Activated CD4-positive, alpha-beta memory T cell treated with anti-CD3 and anti-CD28 coated beads for 36 hours (primary cell): ENCODE measurements at regions of chr13 and their contacts with region 1.

Region 1: DNA sequence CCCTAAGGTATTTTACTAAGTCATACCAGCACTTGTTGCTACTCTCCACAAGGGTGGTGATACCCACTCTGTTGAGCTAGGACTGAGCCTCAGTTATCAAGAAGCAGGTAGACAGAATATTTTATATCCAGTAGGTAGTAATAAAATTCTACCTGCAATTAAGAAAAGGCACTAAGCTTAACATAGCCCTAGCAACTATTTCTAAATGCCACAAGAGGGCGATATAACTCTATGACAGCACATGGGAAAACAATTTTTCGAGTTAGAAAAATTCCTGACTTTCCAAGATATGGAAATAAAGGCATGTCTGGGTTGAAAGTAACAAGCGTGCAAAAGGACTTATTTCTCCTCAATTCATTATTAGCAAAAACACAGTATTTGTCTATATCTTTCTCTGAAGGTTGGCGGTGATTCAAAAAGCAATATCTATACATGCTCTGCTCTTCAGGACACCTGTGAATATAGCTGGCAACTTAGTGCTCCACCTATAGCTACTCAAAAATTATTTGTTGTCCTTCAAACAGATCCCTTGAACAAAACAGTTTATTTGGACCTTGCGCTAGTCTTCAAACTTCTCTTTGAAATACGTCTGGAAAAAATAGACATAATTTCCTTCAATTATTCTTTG is 14.7 kb downstream of the CCDC169 start:
- DNase-seq: no peak
- H3K4me3 Mint-ChIP-seq: no peak overlapping the region
- H3K27ac Mint-ChIP-seq: no peak overlapping the region
- H3K4me1 Mint-ChIP-seq: no peaks in the 10 kb centered on the region
- H3K27me3 Mint-ChIP-seq: peaks cover 4% of the 10 kb centered on the region

Region 2: GRCh38 chr13:35475960-35476943 is 806.7 kb before region 1 on chr13 and contains the start of gene MAB21L1:
- CTCF ChIA-PET with region 1: no interaction called
- POLR2A ChIA-PET with region 1: no interaction called
- intact Hi-C with region 1: no loop called
- DNase-seq: no peak
- H3K4me3 Mint-ChIP-seq: peak within 1 kb of the TSS; percentile 65
- H3K27ac Mint-ChIP-seq: no peak within 1 kb of the TSS
- H3K4me1 Mint-ChIP-seq: peaks cover 20% of the 10 kb centered on the region
- H3K27me3 Mint-ChIP-seq: peaks cover 62% of the 10 kb centered on the region
- total RNA-seq, gene MAB21L1: not detected

Region 3: DNA sequence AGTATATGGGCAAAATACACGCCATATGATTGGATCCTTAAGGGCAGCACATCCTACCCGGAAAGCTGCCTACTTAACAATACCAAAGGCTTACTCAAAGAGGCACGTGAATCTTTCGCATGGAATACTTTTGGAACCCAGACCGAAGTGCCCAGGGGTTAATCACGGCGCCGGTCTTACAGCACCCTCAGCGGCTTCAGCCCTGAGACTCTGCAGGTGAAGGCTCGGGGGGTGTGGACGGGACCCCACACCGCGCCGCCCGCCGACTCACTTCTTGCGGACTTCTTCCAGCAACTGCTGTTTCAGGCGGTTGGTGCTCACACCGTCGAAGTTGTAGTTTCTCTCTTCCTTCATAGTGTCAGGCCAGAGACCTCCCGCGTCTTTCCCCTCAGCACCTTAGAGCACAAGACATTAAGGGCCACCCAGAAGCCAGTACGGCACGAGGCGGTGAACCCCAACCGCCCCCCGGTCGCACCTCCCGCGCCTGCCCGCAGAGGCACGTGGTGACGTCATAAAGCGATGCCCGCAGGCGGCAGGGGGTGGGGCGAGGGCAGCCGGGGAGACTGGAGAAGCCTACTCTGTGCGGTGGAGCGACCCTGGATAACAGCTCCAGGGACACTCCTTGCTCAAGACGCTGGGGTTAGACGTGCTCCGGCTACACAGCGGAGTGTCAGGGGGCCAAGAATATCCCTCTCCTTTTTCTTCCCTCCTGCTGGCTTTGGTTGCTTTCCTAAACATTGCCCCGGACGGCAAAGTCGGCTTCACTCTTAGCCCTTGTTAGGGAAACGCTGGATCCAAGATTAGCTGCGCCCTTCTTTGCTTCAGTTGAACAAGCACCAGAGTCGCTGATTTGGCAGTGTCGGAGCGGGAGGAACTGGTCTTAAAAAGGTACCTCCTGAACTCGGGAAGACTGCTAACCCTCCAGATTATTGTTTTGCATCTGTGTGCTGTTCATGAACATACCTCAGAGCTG is 14.7 kb after region 1 on chr13 and contains the start of gene CCDC169:
- CTCF ChIA-PET with region 1: interaction called, 22 read pairs
- POLR2A ChIA-PET with region 1: no interaction called
- intact Hi-C with region 1: no loop called
- DNase-seq: peak; percentile 78
- H3K4me3 Mint-ChIP-seq: peak within 1 kb of the TSS; percentile 82
- H3K27ac Mint-ChIP-seq: peak within 1 kb of the TSS; percentile 60
- H3K4me1 Mint-ChIP-seq: peaks cover 15% of the 10 kb centered on the region
- H3K27me3 Mint-ChIP-seq: peaks cover 24% of the 10 kb centered on the region
- total RNA-seq, gene CCDC169: 0.69 to 1.1 TPM

Region 4: DNA sequence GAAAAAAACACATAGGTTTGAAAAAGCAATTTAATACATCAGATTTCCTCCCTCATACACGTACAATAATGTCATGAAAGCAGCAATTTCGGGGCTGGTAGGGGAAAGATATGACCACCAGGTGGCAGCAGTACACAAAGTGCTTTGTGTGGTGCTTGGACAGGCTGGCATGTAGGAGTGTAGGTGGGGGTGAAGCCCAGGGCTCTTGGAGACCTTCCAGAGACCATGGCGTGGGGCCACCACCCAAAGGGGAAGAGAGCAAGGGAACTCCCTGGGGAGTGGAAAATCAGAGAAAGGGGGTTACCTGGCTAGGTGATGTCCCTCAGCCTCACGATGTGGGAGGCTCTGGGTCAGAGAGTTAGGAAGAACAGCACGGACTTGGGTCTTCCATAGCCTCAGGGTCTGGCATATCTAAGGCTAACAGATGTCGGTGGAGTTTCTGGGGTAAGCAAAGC is 137.5 kb after region 1 on chr13:
- CTCF ChIA-PET with region 1: interaction called, 4 read pairs
- POLR2A ChIA-PET with region 1: no interaction called
- intact Hi-C with region 1: loop called (anchors 5 kb)
- DNase-seq: peak; percentile 79
- H3K4me3 Mint-ChIP-seq: no peak overlapping the region
- H3K27ac Mint-ChIP-seq: peak overlapping the region; percentile 21
- H3K4me1 Mint-ChIP-seq: peaks cover 21% of the 10 kb centered on the region
- H3K27me3 Mint-ChIP-seq: peaks cover 43% of the 10 kb centered on the region

Region 5: GRCh38 chr13:36834299-36834698 is 551.4 kb after region 1 on chr13:
- CTCF ChIA-PET with region 1: no interaction called
- POLR2A ChIA-PET with region 1: no interaction called
- intact Hi-C with region 1: no loop called
- DNase-seq: no peak
- H3K4me3 Mint-ChIP-seq: no peak overlapping the region
- H3K27ac Mint-ChIP-seq: no peak overlapping the region
- H3K4me1 Mint-ChIP-seq: peaks cover 4% of the 10 kb centered on the region
- H3K27me3 Mint-ChIP-seq: no peaks in the 10 kb centered on the region